GM10248 (cell line): ENCODE measurements at regions of chr1 and their contacts with region 1.

Region 1: GRCh38 chr1:20194757-20195461 is 8.6 kb upstream of the PLA2G2C start:
- DNase-seq: peak; percentile 76
- CTCF ChIP-seq: peak; percentile 91

Region 2: GRCh38 chr1:19882111-19883071 is 312.5 kb before region 1 on chr1 and contains the start of gene OTUD3:
- CTCF ChIA-PET with region 1: interaction called, 12 read pairs
- POLR2A ChIA-PET with region 1: no interaction called
- DNase-seq: peak; percentile 98
- CTCF ChIP-seq: peak; percentile 92

Region 3: DNA sequence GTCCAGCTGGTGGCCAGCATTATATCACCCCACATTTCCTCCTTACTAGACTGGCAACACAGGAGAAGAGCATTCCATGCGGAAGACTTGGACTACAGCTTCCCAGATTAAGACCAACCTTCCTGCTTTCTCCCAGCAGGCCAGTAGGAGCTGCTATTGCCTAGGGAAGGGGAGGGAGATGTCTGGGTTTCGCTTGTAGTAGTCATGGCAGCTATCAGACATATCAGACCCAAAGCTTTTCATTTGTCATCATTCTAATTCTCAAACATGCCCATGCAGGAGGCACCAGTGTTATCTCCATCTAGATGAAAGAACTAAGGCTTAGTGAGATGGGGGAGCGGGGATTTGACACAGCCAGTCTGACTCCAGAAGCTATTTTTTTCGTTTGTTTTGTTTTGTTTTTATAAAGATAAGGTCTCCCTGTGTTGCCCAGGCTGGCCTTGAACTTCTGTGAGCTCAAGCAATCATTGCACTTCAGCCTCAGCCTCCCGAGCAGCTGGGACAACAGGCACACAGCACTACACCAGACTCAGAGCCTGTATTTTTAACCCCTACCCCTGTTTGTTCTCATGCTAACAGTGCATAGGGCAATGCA is 220.0 kb before region 1 on chr1:
- CTCF ChIA-PET with region 1: interaction called, 15 read pairs
- POLR2A ChIA-PET with region 1: no interaction called
- DNase-seq: peak; percentile 37
- CTCF ChIP-seq: peak; percentile 71

Region 4: DNA sequence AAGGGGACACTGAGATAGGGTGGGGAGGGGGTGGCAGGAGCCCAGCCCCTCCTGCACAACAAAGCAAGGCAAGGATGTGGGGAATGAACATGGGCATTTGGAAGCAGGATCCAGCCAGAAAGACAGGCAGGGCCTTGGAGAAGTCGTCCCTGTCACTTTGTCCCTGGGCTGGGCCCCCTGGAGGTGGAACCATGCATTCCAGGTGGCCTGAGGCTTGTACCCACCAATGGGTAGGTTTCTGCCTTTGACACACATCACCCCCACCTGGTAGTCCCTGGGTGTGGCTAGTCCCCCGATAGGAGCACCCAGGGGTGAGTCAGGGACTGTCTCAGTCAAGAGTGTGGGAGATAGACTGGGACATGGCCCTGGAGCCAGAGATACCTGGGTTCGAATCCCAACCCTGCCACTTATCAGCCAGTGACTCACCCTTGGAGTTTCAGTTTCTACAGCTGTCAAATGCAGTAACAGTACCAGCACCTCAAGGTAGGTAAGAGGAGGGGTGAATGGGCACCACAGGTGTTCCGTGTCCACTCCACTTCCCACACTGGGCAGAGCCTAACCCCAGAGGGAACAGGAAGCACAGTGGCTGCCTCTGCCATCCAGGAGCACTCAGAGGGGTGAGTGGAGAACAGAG is 85.6 kb before region 1 on chr1:
- CTCF ChIA-PET with region 1: no interaction called
- POLR2A ChIA-PET with region 1: no interaction called
- DNase-seq: no peak
- CTCF ChIP-seq: no peak

Region 5: GRCh38 chr1:20158358-20159067 is 36.4 kb before region 1 on chr1:
- CTCF ChIA-PET with region 1: interaction called, 14 read pairs
- POLR2A ChIA-PET with region 1: no interaction called
- DNase-seq: no peak
- CTCF ChIP-seq: no peak

Region 6: GRCh38 chr1:20178634-20179370 is 16.1 kb before region 1 on chr1:
- CTCF ChIA-PET with region 1: interaction called, 49 read pairs
- POLR2A ChIA-PET with region 1: no interaction called
- DNase-seq: no peak
- CTCF ChIP-seq: no peak

Region 7: DNA sequence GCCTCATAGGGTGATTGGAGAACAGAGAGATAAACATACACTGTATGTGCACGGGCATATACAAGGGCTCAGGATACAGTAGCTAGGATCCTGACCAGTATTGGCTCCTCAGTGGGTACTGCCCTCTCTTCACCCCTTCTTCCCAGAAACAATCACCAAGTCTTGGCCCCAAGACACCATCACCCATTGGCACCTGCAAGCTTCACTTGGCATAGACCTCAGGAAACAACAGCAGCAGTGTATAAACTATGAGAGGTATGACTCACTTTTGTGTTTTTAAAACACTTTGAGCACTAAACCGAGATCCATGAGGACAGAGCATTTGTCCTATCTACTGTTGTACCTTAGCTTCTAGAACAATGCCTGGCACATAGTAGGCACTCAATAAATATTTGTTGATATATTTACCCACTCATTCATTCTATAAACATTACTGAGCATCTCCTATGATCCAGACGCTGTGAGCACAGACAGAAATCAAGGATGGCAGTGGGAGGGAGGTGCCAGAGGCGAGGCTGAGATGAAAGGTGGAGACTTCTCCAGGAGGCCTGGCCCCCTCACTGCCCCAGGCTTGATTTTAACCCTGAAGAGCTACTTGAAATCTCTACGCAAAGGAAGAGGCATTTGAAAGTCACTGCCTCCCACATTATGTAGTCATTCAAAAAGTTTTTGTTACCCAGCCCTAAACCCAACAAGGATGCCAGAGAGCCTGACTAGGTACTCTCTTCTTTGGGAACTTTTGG is 195.9 kb after region 1 on chr1:
- CTCF ChIA-PET with region 1: no interaction called
- POLR2A ChIA-PET with region 1: no interaction called
- DNase-seq: no peak
- CTCF ChIP-seq: no peak